ENCODE measurements at regions of chr17 and their contacts with region 1.

Region 1: GRCh38 chr17:75779231-75779986 is 5.2 kb upstream of the UNK start:
- DNase-seq: peak; percentile 98 to 99
- ATAC-seq: peak; percentile 75 to 80
- H3K4me3 ChIP-seq: peak overlapping the region; percentile 83 to 96 (median 88)
- H3K27ac ChIP-seq: peak overlapping the region; percentile 91 to 98 (median 98)
- H3K4me1 ChIP-seq: peaks cover 54 to 55% of the 10 kb centered on the region in 2 donors
- H3K27me3 ChIP-seq: no peaks in the 10 kb centered on the region
- CTCF ChIP-seq: no peak
- POLR2A ChIP-seq: peak; percentile 100

Region 2: GRCh38 chr17:75753514-75754377 is 25.7 kb before region 1 on chr17:
- in situ Hi-C with region 1: no loop called
- intact Hi-C with region 1: no loop called
- DNase-seq: peak in 1 of 2 donors; percentile 48
- ATAC-seq: peak; percentile 64 to 76
- H3K4me3 ChIP-seq: peak overlapping the region; percentile 56 to 71 (median 57)
- H3K27ac ChIP-seq: peak overlapping the region in 1 of 4 donors; percentile 12
- H3K4me1 ChIP-seq: peaks cover 13 to 15% of the 10 kb centered on the region in 2 donors
- H3K27me3 ChIP-seq: no peaks in the 10 kb centered on the region
- CTCF ChIP-seq: peak; percentile 22 to 72 (median 55)
- POLR2A ChIP-seq: no peak

Region 3: GRCh38 chr17:75855310-75856081 is 76.1 kb after region 1 on chr17 and contains the start of gene WBP2:
- in situ Hi-C with region 1: loop called in 1 of 4 experiments (anchors 5 kb)
- intact Hi-C with region 1: loop called (anchors 1 kb)
- DNase-seq: peak; percentile 100
- ATAC-seq: peak; percentile 79 to 80
- H3K4me3 ChIP-seq: peak within 1 kb of the TSS; percentile 63 to 85 (median 78)
- H3K27ac ChIP-seq: peak within 1 kb of the TSS; percentile 95 to 99 (median 96)
- H3K4me1 ChIP-seq: peaks cover 39 to 40% of the 10 kb centered on the region in 2 donors
- H3K27me3 ChIP-seq: no peaks in the 10 kb centered on the region
- CTCF ChIP-seq: peak; percentile 54 to 79 (median 61)
- POLR2A ChIP-seq: peak; percentile 96 to 100
- total RNA-seq, gene WBP2: 129 to 259 (median 148) TPM

Region 4: GRCh38 chr17:75877752-75878173 is 98.4 kb after region 1 on chr17:
- in situ Hi-C with region 1: loop called in 1 of 4 experiments (anchors 25 kb)
- intact Hi-C with region 1: loop called (anchors 1 kb)
- DNase-seq: peak; percentile 42 to 60
- ATAC-seq: peak; percentile 53 to 59
- H3K4me3 ChIP-seq: peak overlapping the region; percentile 56 to 87 (median 70)
- H3K27ac ChIP-seq: peak overlapping the region; percentile 79 to 92 (median 86)
- H3K4me1 ChIP-seq: peaks cover 37 to 38% of the 10 kb centered on the region in 2 donors
- H3K27me3 ChIP-seq: no peaks in the 10 kb centered on the region
- CTCF ChIP-seq: peak in 4 of 5 experiments; percentile 45 to 65 (median 58)
- POLR2A ChIP-seq: no peak